ENCODE measurements at regions of chr6 and their contacts with region 1.

Region 1: DNA sequence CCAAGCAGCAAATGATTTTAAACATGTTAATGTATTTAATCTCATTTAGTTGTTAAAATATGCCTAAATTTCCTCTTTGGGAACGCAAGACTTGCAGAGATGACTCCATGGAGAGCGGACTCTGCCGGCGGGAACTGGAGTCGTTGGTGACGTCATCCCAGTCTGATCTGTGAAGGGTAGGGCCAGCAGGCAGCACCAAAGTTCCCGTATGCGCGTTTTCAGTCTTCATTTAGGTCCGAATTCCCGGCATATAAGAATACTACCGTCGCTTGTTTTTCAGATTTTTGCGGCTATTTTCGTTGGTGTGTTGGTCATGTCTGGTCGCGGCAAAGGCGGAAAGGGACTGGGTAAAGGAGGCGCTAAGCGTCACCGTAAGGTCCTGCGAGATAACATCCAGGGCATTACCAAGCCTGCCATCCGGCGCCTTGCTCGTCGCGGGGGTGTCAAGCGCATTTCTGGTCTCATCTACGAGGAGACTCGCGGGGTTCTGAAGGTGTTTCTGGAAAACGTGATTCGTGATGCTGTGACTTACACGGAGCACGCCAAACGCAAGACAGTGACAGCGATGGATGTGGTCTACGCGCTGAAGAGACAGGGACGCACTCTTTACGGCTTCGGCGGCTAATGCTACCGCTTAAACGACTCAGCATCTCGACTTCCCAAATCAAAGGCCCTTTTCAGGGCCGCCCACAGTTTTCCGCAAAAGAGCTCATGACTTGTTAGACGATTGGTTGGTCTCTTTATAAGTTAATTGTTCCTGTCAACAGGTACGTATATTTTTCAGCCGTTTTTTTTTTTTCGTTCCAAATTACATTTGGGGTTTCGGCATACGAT is 117.3 kb downstream of the HFE start:
- DNase-seq: peak; percentile 95 to 96
- H3K4me3 ChIP-seq: peak overlapping the region; percentile 50
- CTCF ChIP-seq: no peak
- POLR2A ChIP-seq: peak in 1 of 2 donors; percentile 58

Region 2: GRCh38 chr6:26122793-26123674 is 81.5 kb before region 1 on chr6:
- intact Hi-C with region 1: loop called (anchors 10 kb)
- DNase-seq: peak; percentile 98
- H3K4me3 ChIP-seq: peak overlapping the region; percentile 78
- CTCF ChIP-seq: no peak
- POLR2A ChIP-seq: no peak

Region 3: GRCh38 chr6:26225639-26226578 is 21.4 kb after region 1 on chr6:
- intact Hi-C with region 1: loop called (anchors 1 kb)
- DNase-seq: no peak
- H3K4me3 ChIP-seq: no peak overlapping the region
- CTCF ChIP-seq: no peak
- POLR2A ChIP-seq: no peak